PC-3 (cell line): ENCODE measurements at regions of chr10 and their contacts with region 1.

Region 1: DNA sequence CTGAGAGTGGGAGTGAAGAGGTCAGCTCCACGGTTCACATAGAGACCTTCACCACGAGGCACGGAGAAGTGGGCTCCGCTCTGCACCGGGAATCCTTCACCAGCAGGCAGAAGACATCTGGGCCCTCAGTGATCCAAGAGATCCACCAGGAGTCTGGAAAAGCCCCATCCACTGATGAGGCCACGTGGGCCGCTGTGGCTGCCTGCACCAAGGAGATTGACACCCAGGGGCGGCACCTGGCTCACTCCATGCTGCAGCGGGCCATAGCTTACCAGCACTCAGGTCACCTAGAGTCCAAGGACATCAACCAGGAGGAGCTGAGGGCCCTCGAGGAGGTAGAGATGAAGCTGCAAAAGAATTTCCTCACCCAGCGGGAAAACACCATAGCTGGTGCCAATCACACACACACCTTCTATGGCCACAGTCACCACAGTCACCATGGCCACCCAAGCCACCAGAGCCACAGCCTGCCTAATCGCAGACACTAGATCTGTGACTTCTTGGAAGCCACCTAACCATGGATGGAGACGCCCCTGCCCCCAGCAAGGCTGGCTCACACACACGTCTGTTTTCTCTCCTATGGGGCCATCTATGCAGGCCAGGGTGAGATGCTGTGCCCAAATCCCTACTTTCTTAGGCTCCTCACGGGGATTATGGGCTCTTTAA is 694 bp downstream of the C10orf62 start:
- DNase-seq: no peak
- ATAC-seq: no peak
- H3K4me3 ChIP-seq: no peak overlapping the region
- H3K27ac ChIP-seq: no peak overlapping the region
- H3K4me1 ChIP-seq: no peaks in the 10 kb centered on the region
- H3K27me3 ChIP-seq: no peaks in the 10 kb centered on the region
- CTCF ChIP-seq: no peak

Region 2: GRCh38 chr10:96765406-96766240 is 824.6 kb before region 1 on chr10:
- CTCF ChIA-PET with region 1: no interaction called
- POLR2A ChIA-PET with region 1: no interaction called
- intact Hi-C with region 1: no loop called
- DNase-seq: peak; percentile 66
- ATAC-seq: peak; percentile 73
- H3K4me3 ChIP-seq: no peak overlapping the region
- H3K27ac ChIP-seq: no peak overlapping the region
- H3K4me1 ChIP-seq: no peaks in the 10 kb centered on the region
- H3K27me3 ChIP-seq: no peaks in the 10 kb centered on the region
- CTCF ChIP-seq: peak; percentile 88

Region 3: GRCh38 chr10:97623277-97623676 is 33.1 kb after region 1 on chr10:
- CTCF ChIA-PET with region 1: no interaction called
- POLR2A ChIA-PET with region 1: interaction called, 11 read pairs
- intact Hi-C with region 1: no loop called
- DNase-seq: no peak
- ATAC-seq: no peak
- H3K4me3 ChIP-seq: no peak overlapping the region
- H3K27ac ChIP-seq: no peak overlapping the region
- H3K4me1 ChIP-seq: no peaks in the 10 kb centered on the region
- H3K27me3 ChIP-seq: no peaks in the 10 kb centered on the region
- CTCF ChIP-seq: no peak